GM12878 (cell line): ENCODE measurements at regions of chr3 and their contacts with region 1.

Region 1: GRCh38 chr3:98445949-98446406 is 17.0 kb upstream of the OR5K1 start:
- DNase-seq: peak; percentile 48
- ATAC-seq: peak; percentile 87
- H3K4me3 ChIP-seq: no peak overlapping the region
- H3K27ac ChIP-seq: peak overlapping the region; percentile 71
- H3K4me1 ChIP-seq: peaks cover 14% of the 10 kb centered on the region; the same call in 1 of the 2 replicates
- H3K27me3 ChIP-seq: no peaks in the 10 kb centered on the region
- CTCF ChIP-seq: no peak
- EP300 ChIP-seq: peak in 1 of 2 experiments; percentile 70; a peak in 2 of 4 replicates
- POLR2A ChIP-seq: no peak
- RAD21 ChIP-seq: no peak

Region 2: GRCh38 chr3:98460220-98460619 is 14.2 kb after region 1 on chr3:
- CTCF ChIA-PET with region 1: interaction called, 10 read pairs
- POLR2A ChIA-PET with region 1: no interaction called
- RAD21 ChIA-PET with region 1: no interaction called
- SMC1A ChIA-PET with region 1: interaction called, 10 read pairs
- in situ Hi-C with region 1: no loop called
- intact Hi-C with region 1: no loop called
- DNase-seq: no peak
- ATAC-seq: peak; percentile 52; the same call in 2 of the 3 replicates
- H3K4me3 ChIP-seq: no peak overlapping the region
- H3K27ac ChIP-seq: no peak overlapping the region
- H3K4me1 ChIP-seq: no peaks in the 10 kb centered on the region
- H3K27me3 ChIP-seq: no peaks in the 10 kb centered on the region
- CTCF ChIP-seq: no peak
- EP300 ChIP-seq: no peak
- POLR2A ChIP-seq: no peak
- RAD21 ChIP-seq: no peak

Region 3: DNA sequence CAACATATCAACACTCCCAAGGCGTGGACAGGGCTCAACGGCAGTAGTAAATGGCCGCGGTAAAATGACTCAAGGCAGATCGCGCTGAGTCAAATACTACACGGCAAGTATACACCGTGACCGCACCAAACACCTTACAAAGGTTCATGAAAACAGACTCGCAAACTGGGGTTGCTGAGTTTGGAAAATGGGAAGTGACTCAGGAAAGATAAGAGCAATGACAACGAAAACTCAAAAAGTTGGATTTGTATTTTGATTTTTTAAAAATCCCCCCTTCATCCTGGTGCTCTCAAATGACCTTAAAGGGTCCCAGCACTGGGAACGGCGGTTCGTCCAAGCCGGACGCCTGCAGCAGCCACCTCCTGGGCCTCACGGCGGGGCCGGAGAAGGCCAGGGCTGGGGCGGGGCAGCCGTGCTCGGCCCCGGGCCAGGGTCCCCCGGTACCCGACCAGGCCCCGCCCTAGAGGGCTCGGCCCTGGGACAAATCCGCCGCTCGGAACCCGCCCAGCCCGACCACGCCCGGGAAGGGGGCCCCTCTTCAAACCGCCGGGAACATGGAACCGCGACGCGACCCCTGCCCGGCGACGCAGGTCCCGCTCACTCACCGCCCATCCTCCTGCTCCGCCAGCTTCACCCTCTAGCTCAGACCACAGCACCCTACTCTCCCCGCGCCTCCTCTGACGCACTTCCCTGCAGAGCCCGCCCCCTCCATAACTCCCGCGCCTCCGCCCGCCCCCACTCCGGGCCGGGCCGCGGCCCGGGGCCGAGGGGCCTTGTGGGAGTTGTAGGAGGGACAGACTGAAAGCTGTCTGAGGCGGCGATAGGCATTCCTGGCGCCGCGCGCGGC is 76.5 kb after region 1 on chr3 and contains the start of gene CLDND1:
- CTCF ChIA-PET with region 1: no interaction called
- POLR2A ChIA-PET with region 1: no interaction called
- RAD21 ChIA-PET with region 1: interaction called, 5 read pairs
- SMC1A ChIA-PET with region 1: no interaction called
- in situ Hi-C with region 1: no loop called
- intact Hi-C with region 1: loop called (anchors 5 kb)
- DNase-seq: peak; percentile 88
- ATAC-seq: peak; percentile 86
- H3K4me3 ChIP-seq: peak within 1 kb of the TSS; percentile 82
- H3K27ac ChIP-seq: peak within 1 kb of the TSS; percentile 85
- H3K4me1 ChIP-seq: peaks cover 13% of the 10 kb centered on the region; the same call in 1 of the 2 replicates
- H3K27me3 ChIP-seq: no peaks in the 10 kb centered on the region
- CTCF ChIP-seq: no peak
- EP300 ChIP-seq: no peak
- POLR2A ChIP-seq: peak; percentile 94
- RAD21 ChIP-seq: no peak
- polyA plus RNA-seq, gene CLDND1: 150 to 163 TPM